ENCODE measurements at regions of chr6 and their contacts with region 1.

Region 1: DNA sequence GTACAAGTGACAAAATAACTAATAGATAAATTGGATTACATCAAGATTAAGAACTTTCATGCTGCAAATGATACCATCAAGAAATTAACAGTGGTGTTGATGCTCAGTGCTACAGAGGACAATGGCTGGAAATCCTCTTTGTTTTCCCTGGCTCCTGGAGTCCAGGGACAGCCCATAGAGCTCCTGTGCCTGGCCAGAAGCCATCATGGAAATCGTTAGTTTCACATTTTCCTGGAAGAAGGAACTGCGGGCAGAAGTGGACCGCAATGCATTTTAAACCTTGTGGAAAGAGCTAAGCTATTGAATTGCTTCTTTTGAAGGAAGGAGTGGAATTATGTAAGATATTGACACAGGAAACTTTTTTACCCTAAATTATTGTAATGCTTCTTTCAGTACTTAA is 276.0 kb downstream of the GJA1 start:
- DNase-seq: peak; percentile 90
- H3K4me3 ChIP-seq: no peak overlapping the region
- H3K27ac ChIP-seq: no peak overlapping the region
- H3K4me1 ChIP-seq: peaks cover 8% of the 10 kb centered on the region
- H3K27me3 ChIP-seq: no peaks in the 10 kb centered on the region
- CTCF ChIP-seq: no peak
- POLR2A ChIP-seq: no peak

Region 2: DNA sequence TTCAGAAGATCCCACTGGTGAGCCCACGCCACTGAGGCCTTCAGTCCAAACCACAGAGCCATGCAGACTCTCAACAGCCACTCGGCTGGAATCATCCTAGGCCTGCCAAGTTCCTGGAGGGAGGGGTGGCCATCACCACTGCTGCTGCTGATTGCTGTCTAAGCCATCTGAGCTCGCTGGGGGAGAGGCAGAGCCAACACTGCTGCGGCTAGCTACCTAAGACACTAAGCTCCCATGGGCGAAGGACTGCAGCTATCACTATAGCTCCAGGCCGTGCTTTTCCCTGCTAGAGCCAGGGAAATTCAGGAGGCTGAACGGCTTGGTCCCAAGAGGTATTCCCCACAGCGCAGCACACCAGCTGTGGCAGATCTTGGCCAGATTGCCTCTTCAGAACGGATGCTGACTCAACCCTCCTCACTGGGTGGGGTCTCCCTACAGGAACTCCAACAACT is 450.8 kb before region 1 on chr6:
- CTCF ChIA-PET with region 1: no interaction called
- POLR2A ChIA-PET with region 1: no interaction called
- dilution Hi-C with region 1: no loop called
- intact Hi-C with region 1: no loop called
- DNase-seq: peak; percentile 26
- H3K4me3 ChIP-seq: no peak overlapping the region
- H3K27ac ChIP-seq: no peak overlapping the region
- H3K4me1 ChIP-seq: no peaks in the 10 kb centered on the region
- H3K27me3 ChIP-seq: no peaks in the 10 kb centered on the region
- CTCF ChIP-seq: no peak
- POLR2A ChIP-seq: no peak

Region 3: GRCh38 chr6:121666814-121667213 is 44.7 kb before region 1 on chr6:
- CTCF ChIA-PET with region 1: no interaction called
- POLR2A ChIA-PET with region 1: no interaction called
- dilution Hi-C with region 1: no loop called
- intact Hi-C with region 1: loop called (anchors 2 kb)
- DNase-seq: peak; percentile 96
- H3K4me3 ChIP-seq: no peak overlapping the region
- H3K27ac ChIP-seq: no peak overlapping the region
- H3K4me1 ChIP-seq: peaks cover 14% of the 10 kb centered on the region
- H3K27me3 ChIP-seq: no peaks in the 10 kb centered on the region
- CTCF ChIP-seq: no peak
- POLR2A ChIP-seq: no peak

Region 4: GRCh38 chr6:121743691-121744090 is 32.2 kb after region 1 on chr6:
- CTCF ChIA-PET with region 1: no interaction called
- POLR2A ChIA-PET with region 1: no interaction called
- dilution Hi-C with region 1: no loop called
- intact Hi-C with region 1: no loop called
- DNase-seq: no peak
- H3K4me3 ChIP-seq: no peak overlapping the region
- H3K27ac ChIP-seq: no peak overlapping the region
- H3K4me1 ChIP-seq: no peaks in the 10 kb centered on the region
- H3K27me3 ChIP-seq: no peaks in the 10 kb centered on the region
- CTCF ChIP-seq: no peak
- POLR2A ChIP-seq: no peak

Region 5: DNA sequence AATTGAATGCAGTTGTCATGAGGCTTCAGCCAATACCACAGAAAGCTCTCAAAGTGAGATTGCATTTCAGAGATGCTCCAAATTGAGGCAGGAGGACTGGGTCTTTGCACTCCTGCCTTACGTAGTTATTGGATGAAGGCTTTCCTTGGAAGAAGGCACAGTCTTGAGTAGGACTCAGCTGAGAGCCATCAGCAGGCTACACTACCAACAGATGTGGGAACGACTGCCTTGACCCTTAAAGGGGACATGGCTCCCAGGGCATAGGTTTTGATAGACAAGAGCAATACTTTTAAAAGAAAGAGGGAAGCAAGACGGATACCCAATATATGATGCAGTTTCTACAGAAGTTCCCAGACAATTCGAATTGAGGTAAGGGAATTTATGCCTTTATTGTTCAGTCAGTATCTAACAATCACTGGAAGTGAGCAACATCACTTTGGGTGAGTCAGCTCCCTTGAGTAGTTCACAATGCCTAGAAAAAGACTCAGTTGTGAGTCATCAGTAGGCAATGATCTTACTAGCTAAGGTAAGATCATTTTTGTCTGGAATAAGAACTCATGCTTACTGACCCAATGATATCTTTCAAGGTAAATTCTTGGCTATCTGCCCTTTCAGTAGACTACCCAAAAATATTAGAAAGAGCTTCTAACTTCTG is 114.8 kb after region 1 on chr6:
- CTCF ChIA-PET with region 1: no interaction called
- POLR2A ChIA-PET with region 1: no interaction called
- dilution Hi-C with region 1: no loop called
- intact Hi-C with region 1: no loop called
- DNase-seq: peak; percentile 94
- H3K4me3 ChIP-seq: no peak overlapping the region
- H3K27ac ChIP-seq: peak overlapping the region; percentile 86
- H3K4me1 ChIP-seq: peaks cover 15% of the 10 kb centered on the region
- H3K27me3 ChIP-seq: no peaks in the 10 kb centered on the region
- CTCF ChIP-seq: no peak
- POLR2A ChIP-seq: no peak